Dorsolateral prefrontal cortex (tissue), 120 donors: ENCODE measurements at regions of chr1 and their contacts with region 1.

Region 1: GRCh38 chr1:28091043-28091781 is 2.8 kb upstream of the EYA3 start:
- DNase-seq: peak; percentile 24 to 89 (median 66)
- H3K4me3 ChIP-seq: no peak overlapping the region
- H3K27ac ChIP-seq: peak overlapping the region in 28 of 59 donors; percentile 1 to 79 (median 52)
- H3K27me3 ChIP-seq: no peaks in the 10 kb centered on the region
- CTCF ChIP-seq: peak; percentile 56 to 95 (median 84)

Region 2: GRCh38 chr1:27858072-27858958 is 232.9 kb before region 1 on chr1:
- intact Hi-C with region 1: loop called in 1 of 2 experiments (anchors 10 kb)
- DNase-seq: peak; percentile 53 to 93 (median 89)
- H3K4me3 ChIP-seq: peak overlapping the region in 15 of 59 donors; percentile 1 to 47 (median 27)
- H3K27ac ChIP-seq: peak overlapping the region in 11 of 59 donors; percentile 9 to 59 (median 41)
- H3K27me3 ChIP-seq: no peaks in the 10 kb centered on the region
- CTCF ChIP-seq: peak; percentile 76 to 98 (median 94)

Region 3: GRCh38 chr1:28160782-28161266 is 69.6 kb after region 1 on chr1:
- intact Hi-C with region 1: loop called (anchors 5 kb)
- DNase-seq: no peak
- H3K4me3 ChIP-seq: no peak overlapping the region
- H3K27ac ChIP-seq: peak overlapping the region in 31 of 59 donors; percentile 0 to 91 (median 37)
- H3K27me3 ChIP-seq: no peaks in the 10 kb centered on the region
- CTCF ChIP-seq: no peak

Region 4: GRCh38 chr1:28208818-28209441 is 117.7 kb after region 1 on chr1:
- intact Hi-C with region 1: loop called (anchors 2 to 5 kb)
- DNase-seq: peak in 8 of 10 donors; percentile 26 to 84 (median 67)
- H3K4me3 ChIP-seq: no peak overlapping the region
- H3K27ac ChIP-seq: peak overlapping the region in 12 of 59 donors; percentile 6 to 57 (median 38)
- H3K27me3 ChIP-seq: no peaks in the 10 kb centered on the region
- CTCF ChIP-seq: peak in 55 of 56 donors; percentile 57 to 95 (median 75)